GM13976 (cell line): ENCODE measurements at regions of chr15 and their contacts with region 1.

Region 1: GRCh38 chr15:33994005-33994615 is 25.8 kb downstream of the CHRM5 start:
- DNase-seq: no peak
- CTCF ChIP-seq: peak; percentile 36

Region 2: DNA sequence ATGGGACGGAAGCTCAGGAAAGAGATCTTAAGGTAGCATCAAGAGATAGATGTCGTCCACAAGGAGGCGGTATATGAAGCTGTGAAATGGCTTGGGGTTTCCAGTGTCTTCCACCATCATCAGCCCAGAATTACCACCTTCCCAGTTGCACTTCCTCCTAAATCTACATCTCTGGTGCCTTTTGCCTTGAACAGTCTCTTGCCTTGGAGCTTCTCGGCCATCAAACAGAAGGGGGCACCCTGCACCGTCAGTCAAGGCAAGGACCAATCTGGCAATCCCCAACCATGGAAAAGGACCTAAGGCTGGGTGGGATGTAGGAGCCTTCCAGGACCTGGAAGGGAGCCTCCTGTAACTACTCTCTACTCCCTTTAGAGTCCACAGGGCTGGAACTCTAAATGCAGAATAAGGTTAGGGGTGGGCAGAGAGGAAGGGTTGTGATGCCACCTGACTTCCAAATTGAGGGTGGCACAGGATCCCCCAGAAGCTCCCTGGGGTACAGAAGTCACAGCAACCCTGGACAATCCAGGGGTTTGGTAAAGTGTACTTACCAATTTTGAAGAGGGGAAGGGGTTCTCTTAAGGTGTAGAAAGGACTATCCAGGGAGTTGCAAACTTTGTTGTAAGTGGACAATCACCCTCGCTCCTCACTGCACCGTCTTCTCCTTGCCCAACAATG is 684.4 kb before region 1 on chr15:
- in situ Hi-C with region 1: loop called (anchors 25 kb)
- DNase-seq: peak; percentile 36
- CTCF ChIP-seq: no peak

Region 3: GRCh38 chr15:34483644-34484043 is 489.5 kb after region 1 on chr15:
- in situ Hi-C with region 1: no loop called
- DNase-seq: no peak
- CTCF ChIP-seq: no peak